ENCODE measurements at regions of chr14 and their contacts with region 1.

Region 1: DNA sequence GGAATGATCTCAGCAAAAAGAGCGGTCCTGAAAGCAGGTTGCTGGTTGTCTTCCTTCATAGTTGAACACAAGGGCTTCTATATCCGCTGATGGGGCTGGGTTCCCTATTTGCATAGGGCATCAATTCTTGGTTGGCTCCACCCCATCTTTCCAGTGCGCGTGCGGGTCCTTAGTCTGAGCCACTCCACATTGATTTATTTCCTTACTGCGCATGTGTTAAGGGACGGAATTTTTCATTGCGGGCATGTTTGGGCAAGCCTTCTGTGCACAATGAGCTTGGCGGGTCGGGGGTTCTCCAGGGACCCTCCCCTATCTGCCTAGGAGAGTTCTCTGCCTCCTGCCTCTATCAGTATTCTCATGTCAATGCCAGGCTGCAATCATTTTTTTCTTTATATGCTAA is 21.2 kb upstream of the DLGAP5 start:
- DNase-seq: no peak
- H3K4me3 ChIP-seq: no peak overlapping the region
- CTCF ChIP-seq: no peak

Region 2: DNA sequence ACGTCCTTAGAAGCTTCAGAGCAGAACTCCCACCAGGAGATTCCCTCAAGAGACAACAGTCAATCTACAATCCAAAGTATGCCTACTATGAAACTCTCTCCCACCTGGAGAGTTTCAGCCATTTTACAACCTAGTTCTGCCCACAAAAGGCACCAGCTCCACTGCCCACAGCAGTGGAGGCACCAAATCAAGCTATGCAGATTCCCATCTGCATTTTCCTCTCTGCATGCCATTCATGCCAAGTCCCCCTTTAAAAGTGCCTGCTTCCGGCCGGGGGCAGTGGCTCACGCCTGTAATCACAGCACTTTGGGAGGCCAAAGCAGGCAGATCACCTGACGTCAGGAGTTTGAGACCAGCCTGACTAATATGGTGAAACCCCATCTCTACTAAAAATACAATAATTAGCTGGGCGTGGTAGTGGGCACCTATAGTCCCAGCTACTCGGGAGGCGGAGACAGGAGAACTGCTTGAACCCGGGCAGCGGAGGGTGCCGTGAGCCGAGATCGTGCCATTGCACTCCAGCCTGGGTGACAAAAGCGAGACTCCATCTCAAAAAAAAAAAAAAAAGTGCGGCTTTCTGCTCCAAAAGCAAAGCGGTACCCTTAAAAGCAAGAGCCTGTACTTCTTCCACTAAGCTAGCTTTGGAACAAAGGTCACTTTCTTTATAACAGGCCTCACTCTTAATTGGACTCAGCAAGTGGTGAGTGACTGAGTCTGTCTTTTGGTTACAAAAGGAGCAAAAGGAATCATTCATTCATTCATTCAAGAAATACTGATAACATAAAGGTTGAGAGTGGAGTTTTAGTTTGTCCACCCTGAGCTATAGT is 11.2 kb before region 1 on chr14:
- CTCF ChIA-PET with region 1: interaction called, 28 read pairs
- POLR2A ChIA-PET with region 1: no interaction called
- DNase-seq: no peak
- H3K4me3 ChIP-seq: no peak overlapping the region
- CTCF ChIP-seq: no peak

Region 3: DNA sequence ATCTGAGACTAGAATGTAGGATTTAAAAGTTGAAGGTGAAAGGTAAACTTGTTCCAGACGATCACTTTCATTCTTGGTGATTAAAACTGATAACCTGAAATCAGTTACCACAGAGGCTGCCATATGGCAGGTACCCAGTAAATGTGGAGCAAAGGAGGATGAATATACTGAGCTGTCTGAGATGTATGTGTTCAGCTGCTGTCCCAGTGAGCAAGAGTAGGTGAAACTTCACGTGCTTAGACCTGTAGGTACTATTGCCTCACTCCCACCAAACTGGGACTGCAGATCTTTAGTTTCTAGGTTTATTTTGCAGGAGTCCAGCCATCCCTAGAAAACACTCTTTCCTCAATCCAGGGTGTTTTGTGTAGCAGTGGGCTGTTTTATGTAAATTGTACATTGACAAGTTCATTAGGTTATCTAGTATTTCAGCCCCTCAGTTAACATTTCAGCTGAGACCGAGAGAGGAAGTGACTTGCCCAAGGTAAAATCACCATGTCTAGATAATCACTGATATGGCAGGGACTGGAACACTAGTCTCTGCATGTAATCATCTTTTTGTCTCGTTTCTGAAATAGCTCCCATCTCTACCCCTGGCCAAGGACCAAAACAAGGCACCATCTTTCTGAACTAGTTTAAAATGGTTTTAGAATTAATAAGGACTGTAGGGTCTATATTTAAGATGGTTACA is 136.3 kb after region 1 on chr14:
- CTCF ChIA-PET with region 1: interaction called, 32 read pairs
- POLR2A ChIA-PET with region 1: no interaction called
- DNase-seq: no peak
- H3K4me3 ChIP-seq: no peak overlapping the region
- CTCF ChIP-seq: no peak

Region 4: GRCh38 chr14:55430024-55430690 is 217.5 kb after region 1 on chr14:
- CTCF ChIA-PET with region 1: interaction called, 112 read pairs
- POLR2A ChIA-PET with region 1: no interaction called
- DNase-seq: no peak
- H3K4me3 ChIP-seq: no peak overlapping the region
- CTCF ChIP-seq: peak; percentile 44

Measured in AG04449 (cell line).